Right ventricle myocardium inferior (tissue), 1 donor: ENCODE measurements at regions of chr14 and their contacts with region 1.

Region 1: DNA sequence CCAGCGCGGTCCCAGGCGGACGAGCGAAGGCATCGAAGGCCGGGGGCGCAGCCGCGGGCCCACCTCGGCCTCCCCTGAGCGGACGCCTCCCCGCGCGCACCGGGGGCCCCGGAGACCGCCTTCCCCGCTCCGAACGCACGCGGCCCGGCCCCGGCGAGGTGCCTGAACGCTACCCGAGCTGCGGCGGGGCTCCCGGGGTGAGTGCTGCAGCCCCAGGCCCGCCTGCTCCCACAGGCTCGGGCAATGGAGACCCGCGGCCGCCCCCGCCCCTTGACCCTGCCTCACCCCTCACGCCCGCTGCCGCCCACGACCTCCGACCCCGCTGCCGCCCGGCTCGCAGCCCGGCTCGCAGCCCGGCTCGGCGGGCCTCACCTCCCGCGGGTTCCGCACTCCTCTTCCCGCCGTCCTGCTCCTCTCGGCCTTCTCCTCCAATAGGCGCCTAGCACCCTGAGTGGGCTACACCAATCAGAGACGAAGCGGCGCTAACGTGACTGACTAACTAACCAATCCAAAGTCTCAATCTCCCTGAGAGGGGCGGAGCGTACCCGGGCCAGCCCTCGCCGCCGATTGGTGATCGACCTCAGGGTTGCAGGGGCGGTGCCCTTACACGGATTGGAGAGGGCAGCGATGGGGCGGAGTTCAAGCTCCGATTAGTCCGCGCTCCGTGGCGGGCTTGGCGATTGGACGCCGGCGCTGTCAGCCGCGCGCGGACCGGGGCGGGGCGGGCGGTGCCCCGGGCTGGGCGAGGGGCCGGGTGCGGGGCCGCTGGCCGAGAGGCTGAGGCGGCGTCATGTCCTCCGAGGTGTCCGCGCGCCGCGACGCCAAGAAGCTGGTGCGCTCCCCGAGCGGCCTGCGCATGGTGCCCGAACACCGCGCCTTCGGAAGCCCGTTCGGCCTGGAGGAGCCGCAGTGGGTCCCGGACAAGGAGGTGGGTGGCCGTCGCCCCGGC is at the starts of genes XRCC3 and ZFYVE21:
- DNase-seq: peak; percentile 100
- ATAC-seq: peak; percentile 97
- total RNA-seq, gene XRCC3: 2.8 TPM
- total RNA-seq, gene ZFYVE21: 46.9 TPM

Region 2: DNA sequence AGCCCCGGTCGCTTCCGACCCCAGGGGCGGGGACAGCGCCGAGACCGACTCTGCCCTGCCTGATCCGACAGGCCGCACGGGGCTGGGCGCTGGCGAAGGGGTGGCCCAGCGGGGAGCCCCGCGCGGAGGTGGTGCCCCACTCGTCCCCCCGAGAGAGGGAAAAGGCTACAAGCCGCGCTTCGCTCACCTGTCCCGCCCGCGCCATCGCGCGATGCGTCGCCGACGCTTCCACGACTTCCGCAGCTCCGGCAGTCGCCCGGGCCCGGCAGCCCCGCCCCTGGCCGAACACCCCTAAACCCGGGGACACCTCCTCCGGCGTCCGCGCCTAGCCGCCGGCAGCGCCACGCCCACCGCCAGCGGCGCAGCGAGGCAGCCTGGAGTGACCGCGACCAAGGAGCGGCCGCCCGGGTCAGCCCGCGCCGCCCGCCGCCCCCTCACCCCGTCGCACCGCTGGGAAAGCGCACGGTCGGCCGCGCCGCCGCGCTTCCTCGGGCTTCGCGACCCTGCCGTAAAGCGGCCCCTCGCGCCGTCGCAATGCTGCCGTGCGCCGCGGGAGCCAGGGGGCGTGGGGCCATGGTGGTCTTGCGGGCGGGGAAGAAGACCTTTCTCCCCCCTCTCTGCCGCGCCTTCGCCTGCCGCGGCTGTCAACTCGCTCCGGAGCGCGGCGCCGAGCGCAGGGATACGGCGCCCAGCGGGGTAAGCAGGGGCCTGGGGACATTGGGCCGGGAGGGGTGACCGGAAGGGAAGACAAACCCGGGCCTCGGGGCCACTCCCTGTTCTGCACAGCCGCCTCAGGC is 152.7 kb before region 1 on chr14 and contains the starts of genes BAG5 and COA8:
- intact Hi-C with region 1: loop called (anchors 10 kb)
- DNase-seq: peak; percentile 95
- ATAC-seq: peak; percentile 82
- total RNA-seq, gene BAG5: 16.1 TPM
- total RNA-seq, gene COA8: 49.3 TPM

Region 3: GRCh38 chr14:103782376-103782775 is 67.0 kb after region 1 on chr14:
- intact Hi-C with region 1: no loop called
- DNase-seq: no peak
- ATAC-seq: no peak

Region 4: DNA sequence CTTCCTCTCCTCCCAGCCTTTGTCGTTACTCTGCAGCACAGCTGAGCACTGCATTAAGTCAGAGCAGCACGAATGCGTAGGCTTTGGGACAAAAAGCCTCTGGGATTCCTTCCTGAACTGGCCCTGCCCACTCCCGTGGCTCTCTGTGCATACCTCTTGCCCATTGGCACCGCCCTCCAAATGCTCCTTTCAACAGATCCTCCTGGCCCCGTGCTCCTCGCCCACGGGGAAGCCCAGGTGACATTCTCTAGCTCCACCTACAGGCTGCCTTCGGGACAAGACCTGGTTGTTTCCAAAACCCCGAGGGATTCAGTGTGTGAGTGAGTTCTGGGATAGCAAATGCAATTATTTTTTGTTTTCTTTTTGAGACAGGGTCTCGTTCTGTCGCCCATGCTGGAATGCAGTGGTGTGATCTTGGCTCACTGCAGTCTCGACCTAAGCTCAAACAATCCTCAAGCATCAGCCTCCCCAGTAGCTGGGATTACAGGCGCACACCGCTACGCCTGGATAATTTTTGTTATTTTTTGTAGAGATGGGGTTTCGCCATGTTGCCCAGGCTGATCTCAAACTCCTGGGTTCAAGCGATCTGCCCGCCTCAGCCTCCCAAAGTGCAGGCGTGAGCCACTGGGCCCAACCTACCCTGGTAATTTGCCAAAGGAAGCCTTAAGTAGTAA is 195.1 kb after region 1 on chr14:
- intact Hi-C with region 1: loop called (anchors 2 kb)
- DNase-seq: peak; percentile 83
- ATAC-seq: peak; percentile 97